CD4-positive, alpha-beta T cell (primary cell): ENCODE measurements at regions of chr1 and their contacts with region 1.

Region 1: GRCh38 chr1:46724991-46725735 is 6.2 kb upstream of the EFCAB14 start:
- DNase-seq: peak; percentile 48 to 88 (median 61)
- ATAC-seq: peak; percentile 100
- H3K4me3 ChIP-seq: no peak overlapping the region
- H3K4me3 Mint-ChIP-seq: no peak overlapping the region
- H3K27ac ChIP-seq: no peak overlapping the region
- H3K27ac Mint-ChIP-seq: no peak overlapping the region
- H3K4me1 ChIP-seq: peaks cover 5% of the 10 kb centered on the region
- H3K4me1 Mint-ChIP-seq: peaks cover 4% of the 10 kb centered on the region
- H3K27me3 ChIP-seq: peaks cover 10% of the 10 kb centered on the region in 2 experiments
- H3K27me3 Mint-ChIP-seq: peaks cover 36% of the 10 kb centered on the region
- CTCF ChIP-seq: peak; percentile 74

Region 2: DNA sequence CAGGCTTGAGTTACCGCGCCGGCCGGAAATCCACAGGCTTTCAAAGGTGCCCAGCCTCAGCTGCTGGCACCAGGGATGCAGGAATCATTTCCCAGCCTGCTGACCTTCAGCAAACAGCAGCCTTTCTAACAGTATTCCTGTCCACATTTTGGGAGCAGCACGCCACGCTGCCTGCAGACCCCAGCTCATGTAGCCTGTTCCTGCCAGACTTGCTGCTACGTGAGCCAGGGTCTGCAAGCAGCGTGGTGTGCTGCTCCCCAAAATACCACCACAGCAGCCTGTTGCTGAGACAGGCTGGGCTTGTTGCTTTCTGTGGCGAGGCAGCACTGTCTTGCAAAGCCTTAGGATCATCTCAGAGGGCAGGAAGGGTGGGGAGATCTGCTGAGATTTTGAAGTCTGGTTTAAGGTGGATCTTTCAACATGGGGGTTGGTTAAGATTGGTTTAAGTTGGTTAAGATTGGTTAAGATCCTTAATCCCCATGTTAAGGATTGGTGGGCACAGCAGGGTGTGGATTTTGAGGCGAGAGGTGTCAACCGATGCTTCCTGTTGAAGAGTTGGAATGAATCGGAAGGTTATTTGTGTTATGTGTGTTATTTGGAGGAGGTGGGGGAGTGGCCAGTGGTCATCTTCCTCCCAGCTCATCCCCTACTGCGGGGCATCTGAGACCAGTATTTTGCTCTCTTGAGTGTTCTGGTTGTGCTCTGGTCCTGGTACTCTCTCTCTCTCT is 318.1 kb before region 1 on chr1:
- CTCF ChIA-PET with region 1: no interaction called
- POLR2A ChIA-PET with region 1: no interaction called
- intact Hi-C with region 1: loop called in 1 of 2 experiments (anchors 1 kb)
- DNase-seq: peak in 2 of 14 experiments; percentile 16 to 26
- ATAC-seq: no peak
- H3K4me3 ChIP-seq: no peak overlapping the region
- H3K4me3 Mint-ChIP-seq: no peak overlapping the region
- H3K27ac ChIP-seq: no peak overlapping the region
- H3K27ac Mint-ChIP-seq: no peak overlapping the region
- H3K4me1 ChIP-seq: peaks cover 14% of the 10 kb centered on the region
- H3K4me1 Mint-ChIP-seq: no peaks in the 10 kb centered on the region
- H3K27me3 ChIP-seq: no peaks in the 10 kb centered on the region
- H3K27me3 Mint-ChIP-seq: no peaks in the 10 kb centered on the region
- CTCF ChIP-seq: no peak

Region 3: GRCh38 chr1:46442317-46443161 is 282.6 kb before region 1 on chr1:
- CTCF ChIA-PET with region 1: interaction called, 5 read pairs
- POLR2A ChIA-PET with region 1: no interaction called
- intact Hi-C with region 1: loop called (anchors 1 to 2 kb)
- DNase-seq: peak; percentile 47 to 80 (median 62)
- ATAC-seq: peak; percentile 79
- H3K4me3 ChIP-seq: peak overlapping the region; percentile 49
- H3K4me3 Mint-ChIP-seq: peak overlapping the region; percentile 87
- H3K27ac ChIP-seq: no peak overlapping the region
- H3K27ac Mint-ChIP-seq: no peak overlapping the region
- H3K4me1 ChIP-seq: peaks cover 21% of the 10 kb centered on the region
- H3K4me1 Mint-ChIP-seq: peaks cover 20% of the 10 kb centered on the region
- H3K27me3 ChIP-seq: peaks cover 9 to 18% of the 10 kb centered on the region in 2 experiments
- H3K27me3 Mint-ChIP-seq: peaks cover 26% of the 10 kb centered on the region
- CTCF ChIP-seq: peak; percentile 92

Region 4: DNA sequence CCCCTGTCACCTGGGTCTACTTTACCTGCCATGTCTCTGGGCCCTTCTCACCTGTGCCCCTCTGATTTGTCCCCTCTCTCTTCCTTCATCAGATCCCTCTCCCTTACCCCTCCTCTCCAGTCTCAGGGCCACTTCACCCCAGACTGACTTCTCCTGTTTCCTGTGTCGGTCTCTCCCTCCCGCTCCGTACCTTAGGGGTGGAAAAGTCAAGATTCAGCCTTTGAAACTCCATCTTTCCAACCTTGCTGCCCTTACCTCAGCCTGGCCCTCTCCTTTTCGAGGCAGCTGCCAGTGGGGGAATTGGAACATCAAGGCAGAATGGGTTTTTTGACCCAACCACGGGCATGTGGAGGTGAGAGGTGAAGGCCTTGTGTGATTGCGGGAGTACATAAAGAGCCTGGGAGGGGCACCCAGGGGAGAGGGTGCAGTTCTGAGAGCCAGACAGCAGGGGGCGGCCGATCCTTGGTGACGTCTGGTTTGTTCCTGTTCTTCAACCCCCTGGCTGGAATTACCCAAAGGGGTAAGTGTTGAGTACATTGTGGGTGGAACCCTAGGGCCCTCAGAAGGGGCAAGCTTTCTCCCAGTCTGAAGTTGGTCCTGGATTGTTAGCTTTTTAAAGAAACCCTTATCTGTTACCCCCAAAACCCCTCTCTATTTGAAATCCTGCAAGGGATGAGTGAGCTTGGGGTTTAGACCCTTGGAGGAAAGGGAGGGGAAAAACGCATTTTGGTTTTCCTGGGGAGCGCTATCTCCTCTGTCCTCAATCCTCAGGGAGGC is 247.8 kb before region 1 on chr1:
- CTCF ChIA-PET with region 1: interaction called, 3 read pairs
- POLR2A ChIA-PET with region 1: no interaction called
- intact Hi-C with region 1: loop called (anchors 1 kb)
- DNase-seq: peak; percentile 54 to 85 (median 66)
- ATAC-seq: peak; percentile 94
- H3K4me3 ChIP-seq: no peak overlapping the region
- H3K4me3 Mint-ChIP-seq: no peak overlapping the region
- H3K27ac ChIP-seq: no peak overlapping the region
- H3K27ac Mint-ChIP-seq: no peak overlapping the region
- H3K4me1 ChIP-seq: no peaks in the 10 kb centered on the region
- H3K4me1 Mint-ChIP-seq: no peaks in the 10 kb centered on the region
- H3K27me3 ChIP-seq: peaks cover 11 to 16% of the 10 kb centered on the region in 2 experiments
- H3K27me3 Mint-ChIP-seq: peaks cover 58% of the 10 kb centered on the region
- CTCF ChIP-seq: peak; percentile 79

Region 5: GRCh38 chr1:46527474-46528296 is 197.5 kb before region 1 on chr1:
- CTCF ChIA-PET with region 1: interaction called, 3 read pairs
- POLR2A ChIA-PET with region 1: interaction called, 5 read pairs
- intact Hi-C with region 1: loop called in 1 of 2 experiments (anchors 1 kb)
- DNase-seq: peak; percentile 47 to 81 (median 64)
- ATAC-seq: peak; percentile 69
- H3K4me3 ChIP-seq: no peak overlapping the region
- H3K4me3 Mint-ChIP-seq: no peak overlapping the region
- H3K27ac ChIP-seq: no peak overlapping the region
- H3K27ac Mint-ChIP-seq: no peak overlapping the region
- H3K4me1 ChIP-seq: peaks cover 5% of the 10 kb centered on the region
- H3K4me1 Mint-ChIP-seq: no peaks in the 10 kb centered on the region
- H3K27me3 ChIP-seq: peaks cover 6 to 13% of the 10 kb centered on the region in 2 experiments
- H3K27me3 Mint-ChIP-seq: peaks cover 58% of the 10 kb centered on the region
- CTCF ChIP-seq: peak; percentile 76

Region 6: DNA sequence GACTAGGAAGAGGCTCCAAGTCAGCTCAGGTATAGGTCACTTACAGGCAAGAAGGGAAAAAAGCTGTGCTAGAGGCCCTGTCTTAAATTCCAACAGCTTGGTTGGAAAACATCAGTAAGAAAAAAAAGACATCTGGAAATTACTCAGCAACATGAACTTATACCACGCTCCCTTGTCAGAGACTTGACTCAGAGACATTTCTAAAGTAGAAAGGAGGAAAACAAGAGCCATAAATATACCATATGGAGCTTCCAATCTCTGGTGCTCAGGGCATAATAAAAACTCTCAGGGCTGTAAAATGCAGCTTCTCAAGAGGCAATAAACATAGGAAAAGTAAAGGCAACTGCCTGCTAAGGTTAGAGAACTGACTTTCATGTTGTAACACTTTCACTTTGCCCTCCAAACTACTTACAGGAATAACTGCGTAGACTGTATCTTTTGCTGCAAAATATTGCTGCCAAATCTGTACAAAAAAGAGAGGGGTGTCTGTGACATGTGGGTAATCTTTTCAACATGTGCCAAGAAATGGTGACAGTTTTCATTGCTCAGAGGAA is 71.7 kb before region 1 on chr1:
- CTCF ChIA-PET with region 1: no interaction called
- POLR2A ChIA-PET with region 1: no interaction called
- intact Hi-C with region 1: no loop called
- DNase-seq: no peak
- ATAC-seq: no peak
- H3K4me3 ChIP-seq: no peak overlapping the region
- H3K4me3 Mint-ChIP-seq: no peak overlapping the region
- H3K27ac ChIP-seq: no peak overlapping the region
- H3K27ac Mint-ChIP-seq: no peak overlapping the region
- H3K4me1 ChIP-seq: no peaks in the 10 kb centered on the region
- H3K4me1 Mint-ChIP-seq: no peaks in the 10 kb centered on the region
- H3K27me3 ChIP-seq: no peaks in the 10 kb centered on the region
- H3K27me3 Mint-ChIP-seq: no peaks in the 10 kb centered on the region
- CTCF ChIP-seq: no peak